Breast epithelium (tissue), 4 donors: ENCODE measurements at regions of chr3 and their contacts with region 1.

Region 1: GRCh38 chr3:70874899-70875298 is 562.5 kb upstream of the MDFIC2 start:
- DNase-seq: no peak
- H3K4me3 ChIP-seq: no peak overlapping the region
- H3K27ac ChIP-seq: no peak overlapping the region
- H3K4me1 ChIP-seq: no peaks in the 10 kb centered on the region
- H3K27me3 ChIP-seq: no peaks in the 10 kb centered on the region
- CTCF ChIP-seq: no peak
- POLR2A ChIP-seq: no peak

Region 2: DNA sequence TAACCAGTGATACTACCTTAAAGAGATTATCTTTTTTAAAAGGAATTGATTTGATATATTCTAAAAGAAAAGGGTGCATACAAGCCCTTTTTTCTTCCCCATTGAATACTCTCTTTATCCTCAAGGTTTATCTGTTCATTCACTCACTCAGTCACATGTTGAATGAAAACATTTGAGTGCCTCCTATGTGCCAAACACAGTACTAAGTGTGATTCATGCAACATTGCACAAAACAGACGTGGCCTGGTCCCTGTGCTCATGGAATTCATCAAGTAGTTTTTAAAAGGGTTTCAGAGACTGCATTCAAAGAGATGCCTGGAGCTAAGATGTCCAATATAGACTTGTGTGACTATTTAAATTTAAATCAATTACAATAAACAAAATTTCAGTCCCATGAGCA is 100.3 kb before region 1 on chr3:
- intact Hi-C with region 1: loop called (anchors 5 kb)
- DNase-seq: no peak
- H3K4me3 ChIP-seq: no peak overlapping the region
- H3K27ac ChIP-seq: no peak overlapping the region
- H3K4me1 ChIP-seq: no peaks in the 10 kb centered on the region
- H3K27me3 ChIP-seq: no peaks in the 10 kb centered on the region
- CTCF ChIP-seq: no peak
- POLR2A ChIP-seq: no peak